Pancreas (tissue), 10 donors: ENCODE measurements at regions of chr1 and their contacts with region 1.

Region 1: DNA sequence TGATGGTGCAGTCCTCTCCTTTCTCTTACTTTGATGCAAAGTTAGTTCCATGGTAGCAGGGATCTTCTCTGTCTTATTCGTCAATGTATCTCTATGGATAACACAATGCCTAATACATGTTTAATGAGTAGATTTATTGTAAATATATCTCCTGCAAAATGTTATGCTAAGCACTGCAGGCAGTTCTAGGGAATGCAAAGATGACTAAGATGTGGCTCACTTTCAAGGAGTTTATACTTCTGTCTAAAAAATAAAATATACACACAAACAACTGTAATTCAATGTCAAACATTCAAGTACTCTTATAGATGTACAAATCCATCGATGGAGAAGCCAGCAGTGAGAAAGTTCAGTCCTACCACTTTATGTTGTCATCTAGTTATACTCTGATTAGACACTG is 194.3 kb downstream of the KCTD3 start:
- DNase-seq: no peak
- ATAC-seq: no peak
- H3K4me3 ChIP-seq: no peak overlapping the region
- H3K27ac ChIP-seq: no peak overlapping the region
- H3K4me1 ChIP-seq: no peaks in the 10 kb centered on the region
- H3K27me3 ChIP-seq: no peaks in the 10 kb centered on the region
- CTCF ChIP-seq: no peak

Region 2: DNA sequence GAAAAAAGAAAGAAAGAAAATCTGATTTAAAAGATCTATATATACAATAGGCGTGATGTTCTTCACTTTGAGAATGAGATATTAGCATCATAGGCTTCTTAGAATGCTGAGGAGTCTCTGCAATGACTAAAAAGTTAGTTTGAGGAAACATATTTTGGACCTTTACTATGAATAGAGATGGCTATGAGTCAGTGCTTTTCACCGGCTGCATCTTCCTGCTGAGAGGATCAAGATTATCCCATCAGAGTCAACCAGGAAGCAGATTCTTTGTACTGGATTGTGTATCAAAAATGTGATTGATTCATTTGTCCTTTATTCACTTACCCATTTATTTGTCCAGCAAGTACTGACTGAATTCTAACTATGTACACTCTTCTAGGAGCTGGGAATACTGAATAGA is 534.7 kb before region 1 on chr1:
- intact Hi-C with region 1: no loop called
- DNase-seq: no peak
- ATAC-seq: no peak
- H3K4me3 ChIP-seq: no peak overlapping the region
- H3K27ac ChIP-seq: no peak overlapping the region
- H3K4me1 ChIP-seq: no peaks in the 10 kb centered on the region
- H3K27me3 ChIP-seq: no peaks in the 10 kb centered on the region
- CTCF ChIP-seq: no peak

Region 3: GRCh38 chr1:215556996-215557395 is 204.4 kb before region 1 on chr1:
- intact Hi-C with region 1: loop called in 1 of 3 experiments (anchors 10 kb)
- DNase-seq: no peak
- ATAC-seq: no peak
- H3K4me3 ChIP-seq: no peak overlapping the region
- H3K27ac ChIP-seq: no peak overlapping the region
- H3K4me1 ChIP-seq: no peaks in the 10 kb centered on the region
- H3K27me3 ChIP-seq: no peaks in the 10 kb centered on the region
- CTCF ChIP-seq: no peak

Region 4: DNA sequence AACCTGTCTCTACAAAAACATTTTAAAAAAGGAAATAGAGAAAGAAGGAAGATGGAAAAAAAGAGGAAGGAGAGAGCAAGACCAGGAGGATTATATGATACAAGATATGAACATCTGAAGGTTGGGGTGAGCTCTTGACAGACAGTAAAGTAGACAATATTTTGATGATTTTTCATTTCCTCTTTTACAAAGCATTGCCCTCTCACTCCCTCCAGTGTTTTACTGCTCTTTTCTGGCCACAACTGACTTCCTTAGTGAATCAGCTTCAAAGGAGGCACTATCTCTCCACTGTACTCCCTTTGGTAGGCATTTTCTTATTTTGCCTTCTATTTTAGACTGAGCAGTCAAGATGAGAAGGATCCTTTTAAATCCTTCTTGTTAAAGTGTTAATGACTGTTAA is 102.3 kb after region 1 on chr1:
- intact Hi-C with region 1: no loop called
- DNase-seq: no peak
- ATAC-seq: no peak
- H3K4me3 ChIP-seq: no peak overlapping the region
- H3K27ac ChIP-seq: no peak overlapping the region
- H3K4me1 ChIP-seq: no peaks in the 10 kb centered on the region
- H3K27me3 ChIP-seq: no peaks in the 10 kb centered on the region
- CTCF ChIP-seq: no peak

Region 5: GRCh38 chr1:215957663-215958062 is 196.2 kb after region 1 on chr1:
- intact Hi-C with region 1: no loop called
- DNase-seq: no peak
- ATAC-seq: no peak
- H3K4me3 ChIP-seq: no peak overlapping the region
- H3K27ac ChIP-seq: no peak overlapping the region
- H3K4me1 ChIP-seq: no peaks in the 10 kb centered on the region
- H3K27me3 ChIP-seq: no peaks in the 10 kb centered on the region
- CTCF ChIP-seq: no peak